GM10248 (cell line): ENCODE measurements at regions of chr5 and their contacts with region 1.

Region 1: DNA sequence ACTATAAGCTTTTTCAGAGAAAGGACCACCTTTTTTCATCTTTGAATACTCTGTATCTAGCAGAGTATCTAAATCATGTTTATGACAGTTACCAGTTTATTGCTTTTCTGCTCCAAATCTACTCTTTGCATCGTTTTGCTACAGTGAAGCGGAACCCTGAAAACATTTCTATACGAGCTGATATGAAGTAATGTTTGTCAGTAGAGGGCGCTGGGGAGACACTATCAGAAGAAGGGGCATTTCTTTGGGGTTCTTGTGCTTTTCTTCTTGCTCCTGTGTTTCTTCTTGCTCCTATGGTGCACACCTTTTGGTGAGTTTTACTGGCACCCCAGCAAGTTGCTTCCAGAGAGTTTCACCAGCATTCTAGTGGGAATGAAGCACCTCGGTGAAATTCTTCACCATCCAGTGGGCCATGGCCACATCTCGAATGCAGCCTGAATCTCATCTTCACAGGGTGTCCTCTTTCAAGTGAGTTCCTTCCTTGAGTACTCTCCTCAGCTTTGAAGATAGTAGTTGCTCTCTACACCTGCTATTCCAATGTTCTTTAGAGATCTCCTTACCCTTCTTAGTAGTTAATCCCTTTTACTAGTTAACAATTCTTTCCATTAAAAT is 98.4 kb downstream of the FGF1 start:
- DNase-seq: peak; percentile 23
- CTCF ChIP-seq: peak; percentile 12

Region 2: DNA sequence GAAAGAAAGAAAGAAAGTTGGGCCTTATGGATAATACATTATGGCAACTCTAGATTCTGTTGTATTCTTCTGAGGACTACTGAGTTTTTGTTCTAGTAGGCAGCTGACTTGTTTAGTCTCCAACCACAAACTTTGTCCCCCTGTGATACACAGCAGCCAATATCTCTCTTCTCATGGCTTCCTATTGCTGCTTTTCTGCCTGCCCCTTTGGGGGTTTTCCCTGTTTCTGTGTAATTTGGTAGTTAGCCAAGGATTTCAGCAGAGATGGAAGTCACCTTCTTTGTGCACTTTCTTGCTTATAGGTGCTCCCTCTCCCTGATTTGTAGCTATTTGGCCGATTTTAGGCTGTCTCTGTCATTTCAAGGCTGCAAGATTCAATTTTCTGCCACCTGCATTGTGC is 11.2 kb before region 1 on chr5:
- CTCF ChIA-PET with region 1: interaction called, 10 read pairs
- POLR2A ChIA-PET with region 1: no interaction called
- DNase-seq: no peak
- CTCF ChIP-seq: no peak

Region 3: DNA sequence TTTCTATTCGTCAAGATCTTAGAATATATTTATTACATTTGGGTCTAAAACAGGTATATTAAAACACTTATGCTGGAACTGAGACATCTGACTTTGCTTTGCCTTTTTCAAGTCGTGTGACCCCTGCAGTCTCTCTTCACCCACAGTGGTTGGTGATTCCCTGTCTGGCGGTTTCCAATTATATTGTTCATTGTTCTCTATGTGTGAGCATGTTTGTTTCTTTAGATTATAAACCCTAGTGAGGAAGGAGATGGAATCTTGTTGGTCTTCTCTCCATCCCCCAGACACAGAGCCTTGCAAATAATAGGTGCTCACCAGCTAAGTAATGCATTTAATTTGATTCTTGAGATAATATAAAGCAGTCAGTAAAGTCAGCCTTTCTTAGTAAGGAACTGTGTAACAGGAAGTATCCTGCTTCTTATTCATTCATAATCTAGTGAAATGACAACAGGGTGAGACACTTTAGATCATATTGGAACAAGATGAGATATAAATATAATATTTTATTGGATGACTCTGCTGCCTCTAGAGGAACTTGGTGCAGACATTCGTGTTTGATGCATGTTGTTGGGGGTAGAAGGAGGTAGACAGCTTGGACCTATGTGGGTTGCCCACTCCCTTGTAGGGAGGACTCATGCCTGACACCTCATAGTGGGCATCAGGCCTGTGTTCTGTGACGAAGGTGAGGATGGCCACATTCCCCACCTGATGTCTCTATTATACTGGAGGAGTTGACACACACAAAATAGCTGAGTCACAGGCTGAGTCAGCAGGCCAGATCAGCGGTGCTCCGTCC is 10.3 kb after region 1 on chr5:
- CTCF ChIA-PET with region 1: interaction called, 12 read pairs
- POLR2A ChIA-PET with region 1: no interaction called
- DNase-seq: no peak
- CTCF ChIP-seq: no peak